GM10248 (cell line): ENCODE measurements at regions of chr7 and their contacts with region 1.

Region 1: DNA sequence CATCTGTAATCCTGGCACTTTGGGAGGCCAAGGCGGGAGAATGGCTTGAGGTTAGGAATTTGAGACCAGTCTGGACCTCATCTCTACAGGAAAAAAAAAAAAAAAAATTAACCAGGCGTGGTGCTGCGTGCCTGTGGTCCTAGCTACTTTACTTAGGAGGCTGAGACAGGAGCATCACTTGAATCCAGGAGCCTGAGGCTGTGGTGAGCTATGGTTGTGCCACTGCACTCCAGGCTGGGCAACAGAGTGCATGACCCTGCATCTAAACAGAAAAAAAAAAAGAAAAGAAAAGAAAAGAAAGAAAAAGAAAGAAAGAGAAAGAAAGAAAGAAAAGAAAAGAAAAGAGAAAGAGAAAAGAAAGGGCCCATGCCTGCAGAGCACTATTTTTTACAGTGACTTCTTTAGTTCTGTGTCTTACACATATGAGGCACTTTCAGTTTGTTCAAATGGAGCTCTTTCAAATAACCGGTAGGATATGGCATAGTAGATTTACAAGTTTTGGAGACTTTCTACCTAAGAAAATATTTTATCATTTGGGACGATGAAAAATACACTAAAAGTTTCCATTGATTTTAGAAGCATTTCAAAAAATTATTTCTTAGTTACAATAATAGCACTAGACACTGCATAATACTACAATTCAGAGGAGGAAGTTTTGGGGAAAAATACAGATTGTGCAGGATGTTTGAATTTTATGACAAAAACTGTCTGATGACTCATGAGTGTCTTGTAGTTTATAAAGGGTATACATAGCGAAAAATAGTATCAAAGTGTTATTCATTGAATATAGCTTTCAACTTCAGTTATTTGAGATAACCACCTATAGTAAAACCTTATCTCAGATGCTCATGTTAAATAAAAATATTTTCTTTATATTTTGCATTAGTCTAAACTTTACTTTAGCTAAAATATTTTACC is 75.9 kb downstream of the MDFIC start:
- DNase-seq: no peak
- CTCF ChIP-seq: no peak

Region 2: DNA sequence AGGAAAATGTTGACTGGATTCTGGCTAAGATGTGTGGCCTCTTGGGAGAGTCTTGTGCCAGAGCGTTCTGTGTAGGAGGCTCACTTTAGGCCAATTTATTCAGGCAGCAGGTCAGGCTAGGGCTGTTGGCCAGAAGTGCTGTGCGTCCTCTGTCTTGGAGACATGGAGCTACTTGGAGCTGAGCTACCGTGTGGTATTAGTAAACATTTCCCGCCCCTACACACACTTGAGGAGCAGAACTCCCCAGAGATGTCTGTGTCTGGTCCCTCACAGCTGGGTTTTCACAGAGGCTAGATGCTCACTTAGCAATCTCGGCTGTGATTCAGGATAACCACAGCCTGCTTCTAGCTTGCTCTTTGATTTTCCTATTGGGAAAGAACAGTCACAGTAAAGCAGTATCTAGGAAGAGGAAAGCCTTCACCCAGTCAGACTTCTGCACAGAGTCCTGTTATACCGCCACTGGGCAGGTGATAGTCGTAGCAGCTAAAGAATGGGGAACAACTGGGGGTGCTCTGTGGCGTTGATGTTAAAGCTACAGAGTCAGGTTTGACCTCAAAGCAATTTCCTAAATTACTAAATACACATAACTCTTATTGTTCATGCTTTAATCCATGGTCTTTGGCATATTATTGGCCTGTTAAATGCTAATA is 10.8 kb after region 1 on chr7:
- CTCF ChIA-PET with region 1: interaction called, 18 read pairs
- POLR2A ChIA-PET with region 1: no interaction called
- DNase-seq: no peak
- CTCF ChIP-seq: no peak